ENCODE measurements at regions of chr1 and their contacts with region 1.

Region 1: DNA sequence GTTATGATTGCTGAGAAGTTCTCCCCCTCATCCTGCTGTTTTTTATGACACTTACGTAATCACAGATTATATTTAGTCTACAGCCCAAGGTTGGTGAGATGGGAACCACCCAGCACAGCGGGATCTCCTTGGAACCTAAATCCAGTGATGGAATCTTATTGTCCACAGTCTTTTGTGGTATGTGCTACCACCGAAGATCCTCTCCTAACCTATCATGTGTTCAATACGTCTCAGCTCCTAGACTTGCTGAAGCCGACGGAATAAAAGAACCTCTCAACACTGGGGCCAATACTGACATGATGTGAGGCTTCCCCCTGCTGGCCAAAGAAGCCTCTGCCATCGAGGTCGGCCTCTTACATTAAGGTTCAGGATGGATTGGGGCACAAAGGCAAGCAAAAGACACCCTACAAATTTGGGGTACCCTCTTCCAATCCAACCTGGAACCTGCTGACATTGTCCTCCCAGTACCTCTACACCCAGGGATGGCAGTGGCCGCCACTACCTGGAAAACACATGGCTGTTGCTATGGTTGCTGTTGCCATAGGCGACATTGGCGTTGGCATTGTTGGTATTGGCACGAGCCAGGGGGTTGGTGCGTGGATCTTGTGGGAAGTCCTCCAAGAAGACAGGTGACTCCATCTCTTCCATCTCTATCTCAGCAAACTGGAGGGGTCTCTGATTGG is 19.4 kb upstream of the KIF21B start:
- DNase-seq: peak; percentile 47
- ATAC-seq: peak; percentile 93
- H3K4me3 Mint-ChIP-seq: no peak overlapping the region
- H3K27ac Mint-ChIP-seq: peak overlapping the region; percentile 35
- H3K4me1 Mint-ChIP-seq: peaks cover 2% of the 10 kb centered on the region
- H3K27me3 Mint-ChIP-seq: peaks cover 2% of the 10 kb centered on the region
- CTCF ChIP-seq: peak; percentile 70

Region 2: DNA sequence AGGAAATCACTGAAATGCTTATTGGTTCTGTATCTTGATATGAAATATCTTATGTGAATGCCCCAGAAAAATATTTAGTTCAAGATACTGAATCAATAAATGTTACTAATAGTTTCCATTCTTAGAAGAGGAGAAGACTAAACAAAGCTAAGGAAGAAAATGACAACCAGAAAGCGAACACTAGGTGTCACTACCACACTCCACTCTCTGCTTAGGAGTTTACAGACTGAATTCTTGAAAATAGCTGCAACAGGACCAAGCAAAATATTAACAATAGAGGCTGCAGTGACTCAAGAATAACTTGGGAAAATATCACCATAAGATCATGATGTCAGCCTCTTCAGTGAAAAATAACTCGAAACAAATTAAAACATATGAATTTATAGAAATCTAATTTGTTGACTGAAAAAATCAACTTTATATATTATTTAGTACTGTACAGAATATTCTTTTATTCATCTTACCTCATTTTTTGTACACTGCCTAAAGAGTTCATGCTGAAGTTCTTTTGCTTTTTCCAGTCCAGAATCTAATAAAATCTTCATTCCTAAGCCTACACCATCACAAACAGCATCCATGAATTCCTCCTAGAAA is 484.0 kb before region 1 on chr1:
- CTCF ChIA-PET with region 1: no interaction called
- POLR2A ChIA-PET with region 1: no interaction called
- intact Hi-C with region 1: loop called (anchors 2 kb)
- DNase-seq: no peak
- ATAC-seq: no peak
- H3K4me3 Mint-ChIP-seq: no peak overlapping the region
- H3K27ac Mint-ChIP-seq: no peak overlapping the region
- H3K4me1 Mint-ChIP-seq: peaks cover 4% of the 10 kb centered on the region
- H3K27me3 Mint-ChIP-seq: no peaks in the 10 kb centered on the region
- CTCF ChIP-seq: peak; percentile 57

Region 3: GRCh38 chr1:200971955-200972711 is 70.8 kb before region 1 on chr1:
- CTCF ChIA-PET with region 1: interaction called, 327 read pairs
- POLR2A ChIA-PET with region 1: no interaction called
- intact Hi-C with region 1: loop called (anchors 1 kb)
- DNase-seq: peak; percentile 59
- ATAC-seq: peak; percentile 53
- H3K4me3 Mint-ChIP-seq: no peak overlapping the region
- H3K27ac Mint-ChIP-seq: no peak overlapping the region
- H3K4me1 Mint-ChIP-seq: peaks cover 10% of the 10 kb centered on the region
- H3K27me3 Mint-ChIP-seq: no peaks in the 10 kb centered on the region
- CTCF ChIP-seq: peak; percentile 100

Region 4: GRCh38 chr1:201009962-201010645 is 32.8 kb before region 1 on chr1:
- CTCF ChIA-PET with region 1: interaction called, 9 read pairs
- POLR2A ChIA-PET with region 1: no interaction called
- intact Hi-C with region 1: loop called (anchors 5 kb)
- DNase-seq: no peak
- ATAC-seq: no peak
- H3K4me3 Mint-ChIP-seq: no peak overlapping the region
- H3K27ac Mint-ChIP-seq: no peak overlapping the region
- H3K4me1 Mint-ChIP-seq: peaks cover 31% of the 10 kb centered on the region
- H3K27me3 Mint-ChIP-seq: no peaks in the 10 kb centered on the region
- CTCF ChIP-seq: no peak

Region 5: DNA sequence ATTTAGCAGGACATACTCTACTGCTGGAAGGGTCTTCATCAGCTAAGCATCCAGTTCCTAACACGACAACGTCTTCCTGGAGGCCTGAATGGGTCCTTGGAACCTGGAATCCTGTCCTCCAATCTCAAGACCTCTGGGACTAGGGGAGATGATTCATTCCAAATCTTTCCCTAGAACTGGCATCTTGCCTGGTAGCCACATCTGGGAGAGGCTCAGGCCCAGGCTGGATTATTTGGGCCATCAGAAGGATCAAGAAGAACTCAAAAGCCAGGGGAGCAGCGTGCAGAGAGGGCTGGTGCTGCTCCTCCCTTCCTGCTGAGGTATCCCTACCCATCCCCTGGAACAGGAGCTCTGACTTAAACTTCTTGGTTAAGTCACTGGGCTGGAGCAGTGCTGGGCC is 428.9 kb after region 1 on chr1:
- CTCF ChIA-PET with region 1: no interaction called
- POLR2A ChIA-PET with region 1: interaction called, 10 read pairs
- intact Hi-C with region 1: no loop called
- DNase-seq: no peak
- ATAC-seq: no peak
- H3K4me3 Mint-ChIP-seq: no peak overlapping the region
- H3K27ac Mint-ChIP-seq: no peak overlapping the region
- H3K4me1 Mint-ChIP-seq: peaks cover 7% of the 10 kb centered on the region
- H3K27me3 Mint-ChIP-seq: peaks cover 52% of the 10 kb centered on the region
- CTCF ChIP-seq: no peak

Region 6: DNA sequence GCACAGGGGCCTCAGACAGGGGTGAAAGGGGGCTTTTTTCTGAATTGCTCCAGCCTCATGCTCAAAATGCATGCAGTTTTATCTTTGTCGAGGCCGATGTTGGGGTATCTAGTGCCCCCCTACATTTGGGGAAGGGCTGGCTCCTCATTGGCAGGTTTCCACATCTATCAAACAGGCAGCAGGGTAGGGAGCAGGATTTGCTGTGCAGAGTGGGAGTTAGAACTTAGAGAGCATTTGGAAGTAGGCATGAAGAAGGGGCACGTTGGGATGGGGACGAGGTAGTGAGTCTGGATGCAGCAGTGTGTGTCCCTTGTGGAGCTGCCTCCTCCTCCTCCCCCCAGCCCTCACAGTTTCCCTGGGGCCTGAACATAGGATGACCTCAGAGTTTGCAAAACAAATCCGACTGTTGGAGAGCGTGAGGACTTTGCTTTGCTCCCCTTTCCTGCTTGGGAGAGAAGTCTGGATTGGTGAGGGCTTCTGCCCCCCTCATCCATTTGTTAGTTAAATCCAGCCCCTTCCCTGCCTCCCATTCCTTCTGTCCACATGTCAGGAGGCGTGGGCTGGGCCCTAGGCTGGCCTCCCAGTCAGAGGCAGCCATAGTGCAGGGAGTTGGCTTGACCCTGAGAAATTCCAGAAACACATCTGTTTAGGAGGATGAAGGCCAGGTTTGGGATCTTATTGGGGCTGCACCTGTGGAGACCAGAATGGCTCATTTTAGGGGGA is 1042.9 kb after region 1 on chr1:
- CTCF ChIA-PET with region 1: no interaction called
- POLR2A ChIA-PET with region 1: no interaction called
- intact Hi-C with region 1: no loop called
- DNase-seq: no peak
- ATAC-seq: no peak
- H3K4me3 Mint-ChIP-seq: no peak overlapping the region
- H3K27ac Mint-ChIP-seq: no peak overlapping the region
- H3K4me1 Mint-ChIP-seq: no peaks in the 10 kb centered on the region
- H3K27me3 Mint-ChIP-seq: no peaks in the 10 kb centered on the region
- CTCF ChIP-seq: no peak